GM10248 (cell line): ENCODE measurements at regions of chr11 and their contacts with region 1.

Region 1: DNA sequence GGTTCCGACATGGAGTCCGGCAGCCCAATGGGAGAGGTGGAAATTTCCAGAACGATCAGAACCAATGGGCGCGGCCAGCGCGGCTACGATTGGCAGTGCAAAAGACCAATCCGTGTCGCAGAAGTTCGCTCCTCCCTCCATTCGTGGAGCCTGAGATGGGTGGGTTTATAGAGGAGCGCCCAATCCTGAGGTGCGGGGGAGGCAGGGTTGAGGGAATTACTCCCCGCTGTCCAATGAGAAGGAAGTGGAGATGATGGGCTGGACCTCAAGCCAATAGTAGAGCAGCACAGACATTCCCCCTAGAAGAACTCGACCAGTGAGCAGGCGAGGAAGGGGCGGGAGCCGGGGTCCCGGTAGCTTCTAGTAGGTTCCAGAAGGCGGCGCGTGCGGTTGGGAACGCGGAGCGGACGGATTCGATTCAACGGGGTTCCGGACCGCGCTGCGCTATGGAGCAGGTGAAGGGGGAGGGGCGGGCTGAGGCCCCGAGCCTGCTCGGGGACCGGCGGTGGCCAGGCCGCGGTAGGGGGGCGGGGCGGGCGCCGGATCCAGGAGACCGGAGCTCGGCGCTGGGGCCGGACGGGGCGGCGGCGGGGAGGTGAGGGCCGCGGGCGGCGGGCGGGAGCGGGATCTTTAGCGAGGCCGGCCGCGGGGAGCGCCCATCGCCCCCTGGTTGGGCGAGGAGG is at the start of gene STIP1:
- DNase-seq: peak; percentile 97
- CTCF ChIP-seq: peak; percentile 22

Region 2: GRCh38 chr11:63961608-63962412 is 224.1 kb before region 1 on chr11:
- CTCF ChIA-PET with region 1: no interaction called
- POLR2A ChIA-PET with region 1: interaction called, 11 read pairs
- DNase-seq: no peak
- CTCF ChIP-seq: no peak

Region 3: DNA sequence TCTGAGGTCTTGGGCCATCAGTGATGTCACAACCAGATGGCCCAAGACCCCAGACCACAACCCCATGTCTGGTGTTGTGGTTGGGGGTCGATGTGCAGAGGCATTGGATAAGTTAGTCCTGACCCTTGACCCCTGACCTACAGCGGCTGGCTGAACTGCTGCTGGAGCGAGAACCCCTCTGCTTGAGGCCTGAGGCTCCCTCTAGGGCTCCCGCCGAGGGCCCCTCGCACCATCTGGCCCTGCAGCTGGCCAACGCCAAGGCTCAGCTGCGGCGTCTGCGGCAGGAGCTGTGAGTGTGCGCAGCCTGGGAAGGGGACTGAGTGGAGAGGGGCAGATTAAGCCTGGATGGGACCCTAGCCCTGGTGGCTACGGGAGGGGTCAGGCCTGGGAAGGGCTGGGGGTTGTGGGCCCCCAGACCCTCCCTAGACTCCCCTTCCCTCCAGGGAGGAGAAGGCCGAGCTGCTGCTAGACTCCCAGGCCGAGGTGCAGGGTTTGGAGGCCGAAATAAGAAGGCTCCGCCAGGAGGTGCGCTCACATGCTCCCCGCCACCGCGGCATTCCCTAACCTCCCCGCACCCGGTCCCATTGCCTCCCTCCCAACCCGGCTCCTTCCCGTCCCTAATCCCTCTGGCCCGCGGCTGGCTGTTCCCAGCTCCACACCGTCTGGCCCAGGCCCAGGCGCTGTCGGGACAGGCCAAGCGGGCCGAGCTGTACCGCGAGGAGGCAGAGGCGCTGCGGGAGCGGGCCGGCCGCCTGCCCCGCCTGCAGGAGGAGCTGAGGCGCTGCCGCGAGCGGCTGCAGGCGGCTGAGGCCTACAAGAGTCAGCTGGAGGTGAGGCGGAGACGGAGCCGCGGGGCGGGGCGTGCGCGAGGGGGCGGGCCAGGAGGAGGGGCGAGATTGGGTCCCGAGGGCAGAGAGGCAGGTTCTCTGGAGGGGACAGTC is 156.2 kb after region 1 on chr11:
- CTCF ChIA-PET with region 1: no interaction called
- POLR2A ChIA-PET with region 1: interaction called, 11 read pairs
- DNase-seq: peak; percentile 95
- CTCF ChIP-seq: peak; percentile 28